H1 (cell line): ENCODE measurements at regions of chr17 and their contacts with region 1.

Region 1: GRCh38 chr17:32444308-32445073 is at the start of gene PSMD11:
- DNase-seq: peak; percentile 94 to 99
- H3K4me3 ChIP-seq: peak within 1 kb of the TSS; percentile 93 to 98 (median 96)
- H3K27ac ChIP-seq: peak within 1 kb of the TSS; percentile 90
- H3K4me1 ChIP-seq: peaks cover 0 to 4% (median 1%) of the 10 kb centered on the region in 4 experiments; a peak in 2 of 7 replicates
- H3K27me3 ChIP-seq: peaks cover 0 to 2% (median 0%) of the 10 kb centered on the region in 4 experiments; a peak in 1 of 7 replicates
- CTCF ChIP-seq: peak in 2 of 3 experiments; percentile 83 to 92; a peak in 3 of 4 replicates
- EP300 ChIP-seq: peak in 1 of 2 experiments; percentile 4; a peak in 1 of 3 replicates
- POLR2A ChIP-seq: peak; percentile 70 to 71; a peak in 2 of 3 replicates
- RAD21 ChIP-seq: peak in 1 of 2 experiments; percentile 40; a peak in 3 of 4 replicates
- total RNA-seq, gene PSMD11: 171 and 175 TPM in 2 replicates

Region 2: DNA sequence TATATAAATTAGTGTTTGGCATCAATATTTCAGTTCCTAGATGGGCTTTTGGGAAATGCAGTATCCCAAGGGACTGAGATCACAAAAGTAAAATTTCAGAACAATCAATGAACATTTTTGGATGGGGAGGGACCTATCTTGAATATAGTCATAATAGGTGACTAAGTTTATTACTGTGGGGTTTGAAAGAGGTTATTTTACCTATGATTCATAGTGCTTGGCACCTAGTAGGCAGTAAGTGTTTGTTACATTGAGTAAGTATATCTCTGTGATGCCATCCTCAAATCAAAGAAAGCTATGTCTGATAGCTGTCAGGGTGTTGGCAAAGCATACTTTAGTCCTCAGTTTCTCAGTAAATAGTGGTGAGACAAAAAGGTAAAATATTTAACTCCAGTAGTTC is 57.6 kb before region 1 on chr17:
- CTCF ChIA-PET with region 1: interaction called, 3 read pairs
- POLR2A ChIA-PET with region 1: interaction called, 10 read pairs
- DNase-seq: no peak
- H3K4me3 ChIP-seq: no peak overlapping the region
- H3K27ac ChIP-seq: no peak overlapping the region
- H3K4me1 ChIP-seq: no peaks in the 10 kb centered on the region
- H3K27me3 ChIP-seq: no peaks in the 10 kb centered on the region
- CTCF ChIP-seq: no peak
- EP300 ChIP-seq: no peak
- POLR2A ChIP-seq: no peak
- RAD21 ChIP-seq: no peak

Region 3: GRCh38 chr17:32429598-32429997 is 14.9 kb before region 1 on chr17:
- CTCF ChIA-PET with region 1: interaction called, 10 read pairs
- POLR2A ChIA-PET with region 1: interaction called, 5 read pairs
- DNase-seq: no peak
- H3K4me3 ChIP-seq: no peak overlapping the region
- H3K27ac ChIP-seq: no peak overlapping the region
- H3K4me1 ChIP-seq: no peaks in the 10 kb centered on the region
- H3K27me3 ChIP-seq: no peaks in the 10 kb centered on the region
- CTCF ChIP-seq: no peak
- EP300 ChIP-seq: no peak
- POLR2A ChIP-seq: no peak
- RAD21 ChIP-seq: no peak

Region 4: DNA sequence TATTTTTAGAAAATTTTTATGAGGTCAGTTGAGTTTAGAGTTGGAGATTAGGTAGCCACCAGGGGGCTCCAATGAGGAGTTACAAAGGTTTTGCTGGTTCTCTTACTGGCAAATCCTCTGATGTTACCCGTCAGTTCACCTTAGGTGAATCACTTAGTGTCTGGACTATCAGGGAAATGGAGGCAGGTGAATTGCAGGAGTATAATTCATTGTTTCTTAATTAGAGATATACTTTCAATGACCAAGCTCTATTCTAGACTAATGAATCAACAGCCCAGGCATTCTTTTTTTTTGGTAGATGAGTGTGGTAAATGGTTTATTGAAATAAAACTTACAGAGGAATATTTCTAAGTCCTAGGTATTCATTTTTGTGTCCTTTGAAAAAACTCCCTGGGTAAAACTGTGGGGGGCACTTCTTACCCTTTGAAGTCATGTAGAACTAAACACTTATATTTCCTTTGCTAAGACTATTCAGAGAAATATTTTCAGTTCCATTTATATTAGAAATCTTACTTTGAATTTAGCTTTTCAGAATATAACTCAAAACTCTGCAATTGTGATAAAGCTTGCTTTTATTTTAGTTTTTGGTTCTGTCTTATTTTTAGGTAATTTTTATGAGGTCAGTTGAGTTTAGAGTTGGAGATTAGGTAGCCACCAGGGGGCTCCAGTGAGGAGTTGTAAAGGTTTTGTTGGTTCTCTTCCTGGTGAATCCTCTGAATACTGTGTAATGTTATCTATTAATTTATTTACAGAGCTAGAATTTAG is 17.5 kb after region 1 on chr17:
- CTCF ChIA-PET with region 1: interaction called, 47 read pairs
- POLR2A ChIA-PET with region 1: interaction called, 10 read pairs
- DNase-seq: peak in 1 of 2 experiments; percentile 78
- H3K4me3 ChIP-seq: no peak overlapping the region
- H3K27ac ChIP-seq: no peak overlapping the region
- H3K4me1 ChIP-seq: no peaks in the 10 kb centered on the region
- H3K27me3 ChIP-seq: no peaks in the 10 kb centered on the region
- CTCF ChIP-seq: peak in 2 of 3 experiments; percentile 51 to 59; a peak in 2 of 4 replicates
- EP300 ChIP-seq: no peak
- POLR2A ChIP-seq: no peak
- RAD21 ChIP-seq: peak in 1 of 2 experiments; percentile 20; a peak in 1 of 4 replicates